ENCODE measurements at regions of chr22 and their contacts with region 1.

Region 1: DNA sequence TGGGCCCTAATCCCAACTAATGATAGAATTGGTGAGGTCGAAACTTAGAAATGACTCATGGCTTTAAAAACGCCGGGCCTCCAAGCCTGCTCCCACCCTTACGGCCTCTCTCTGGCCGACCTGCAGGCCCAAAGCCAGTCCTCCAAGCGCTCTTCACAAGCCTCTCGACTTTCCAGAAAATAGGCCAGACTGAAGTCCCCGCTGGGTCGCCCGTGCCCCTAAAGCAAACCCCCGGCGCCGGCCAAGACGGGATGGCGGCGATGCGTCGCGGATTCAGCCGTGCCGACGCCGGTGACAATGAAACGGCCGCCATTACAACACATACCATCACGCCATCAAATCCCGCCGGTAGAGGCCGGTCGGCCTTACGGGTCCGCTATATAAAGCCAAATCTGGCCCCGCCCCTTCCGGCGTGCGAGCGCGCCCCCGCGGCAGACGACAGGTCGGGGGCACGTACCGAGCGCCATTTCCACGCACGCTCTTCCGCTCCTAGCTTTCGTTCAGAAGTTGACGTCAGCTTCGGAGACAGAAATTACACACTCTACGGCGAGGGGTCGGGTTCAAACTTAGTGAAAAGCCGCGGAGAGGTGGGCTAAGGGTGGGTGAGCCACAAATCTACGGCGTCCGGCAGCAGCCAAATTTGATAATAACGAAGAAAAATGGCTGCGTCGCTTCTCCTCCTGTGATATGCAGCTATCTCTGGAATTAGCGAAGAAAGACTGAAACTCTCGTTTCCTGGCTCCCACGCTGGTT is at the start of gene RPL3:
- DNase-seq: peak; percentile 96
- ATAC-seq: peak; percentile 83
- H3K4me3 Mint-ChIP-seq: peak within 1 kb of the TSS; percentile 99
- H3K27ac Mint-ChIP-seq: peak within 1 kb of the TSS; percentile 100
- H3K4me1 Mint-ChIP-seq: peaks cover 31% of the 10 kb centered on the region
- H3K27me3 Mint-ChIP-seq: no peaks in the 10 kb centered on the region
- CTCF ChIP-seq: no peak
- total RNA-seq, gene RPL3: 3,563 to 3,599 TPM

Region 2: DNA sequence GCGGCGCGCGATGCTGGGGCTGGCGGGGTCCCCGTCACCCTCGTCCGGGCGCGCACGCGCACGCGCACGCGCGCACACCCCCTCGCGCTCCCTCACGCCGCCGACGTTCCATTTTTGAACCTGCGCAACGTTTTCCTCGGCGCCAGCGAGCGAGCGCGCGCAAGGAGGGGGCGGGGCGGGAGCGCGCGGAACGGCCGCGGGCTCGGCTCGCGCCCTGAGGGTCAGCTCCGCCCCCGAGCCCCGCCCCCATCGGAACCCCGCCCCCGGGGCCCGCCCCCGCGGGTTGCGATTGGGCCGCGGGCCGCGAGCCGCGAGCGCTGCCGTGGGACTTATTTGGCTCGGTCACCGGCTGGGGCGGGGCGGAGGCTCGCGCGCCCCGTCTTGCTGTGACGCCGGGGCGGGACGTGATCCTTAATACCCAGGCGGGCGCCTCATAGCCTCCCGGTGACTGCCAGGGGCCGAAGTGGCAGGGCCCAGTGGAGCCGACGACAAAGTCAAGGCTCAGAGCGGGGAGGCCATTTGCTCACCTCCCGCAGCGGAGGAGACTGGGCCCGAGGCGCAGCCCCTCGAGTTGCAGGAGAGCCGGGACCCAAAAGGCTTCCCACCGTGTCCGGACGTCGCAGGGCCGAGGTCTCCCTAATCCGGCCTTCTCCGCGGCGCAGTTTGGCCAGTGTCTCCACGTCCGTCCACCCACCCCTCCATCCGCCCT is 166.8 kb before region 1 on chr22 and contains the start of gene CBX7:
- CTCF ChIA-PET with region 1: interaction called, 6 read pairs
- POLR2A ChIA-PET with region 1: interaction called, 61 read pairs
- intact Hi-C with region 1: no loop called
- DNase-seq: peak; percentile 91
- ATAC-seq: peak; percentile 78
- H3K4me3 Mint-ChIP-seq: peak within 1 kb of the TSS; percentile 74
- H3K27ac Mint-ChIP-seq: peak within 1 kb of the TSS; percentile 78
- H3K4me1 Mint-ChIP-seq: peaks cover 44% of the 10 kb centered on the region
- H3K27me3 Mint-ChIP-seq: peaks cover 14% of the 10 kb centered on the region
- CTCF ChIP-seq: no peak
- total RNA-seq, gene CBX7: 23.6 to 25.0 TPM

Region 3: GRCh38 chr22:39236321-39237317 is 82.8 kb before region 1 on chr22:
- CTCF ChIA-PET with region 1: interaction called, 4 read pairs
- POLR2A ChIA-PET with region 1: interaction called, 25 read pairs
- intact Hi-C with region 1: no loop called
- DNase-seq: peak; percentile 82
- ATAC-seq: peak; percentile 55
- H3K4me3 Mint-ChIP-seq: peak overlapping the region; percentile 42
- H3K27ac Mint-ChIP-seq: peak overlapping the region; percentile 40
- H3K4me1 Mint-ChIP-seq: peaks cover 68% of the 10 kb centered on the region
- H3K27me3 Mint-ChIP-seq: peaks cover 23% of the 10 kb centered on the region
- CTCF ChIP-seq: no peak

Region 4: DNA sequence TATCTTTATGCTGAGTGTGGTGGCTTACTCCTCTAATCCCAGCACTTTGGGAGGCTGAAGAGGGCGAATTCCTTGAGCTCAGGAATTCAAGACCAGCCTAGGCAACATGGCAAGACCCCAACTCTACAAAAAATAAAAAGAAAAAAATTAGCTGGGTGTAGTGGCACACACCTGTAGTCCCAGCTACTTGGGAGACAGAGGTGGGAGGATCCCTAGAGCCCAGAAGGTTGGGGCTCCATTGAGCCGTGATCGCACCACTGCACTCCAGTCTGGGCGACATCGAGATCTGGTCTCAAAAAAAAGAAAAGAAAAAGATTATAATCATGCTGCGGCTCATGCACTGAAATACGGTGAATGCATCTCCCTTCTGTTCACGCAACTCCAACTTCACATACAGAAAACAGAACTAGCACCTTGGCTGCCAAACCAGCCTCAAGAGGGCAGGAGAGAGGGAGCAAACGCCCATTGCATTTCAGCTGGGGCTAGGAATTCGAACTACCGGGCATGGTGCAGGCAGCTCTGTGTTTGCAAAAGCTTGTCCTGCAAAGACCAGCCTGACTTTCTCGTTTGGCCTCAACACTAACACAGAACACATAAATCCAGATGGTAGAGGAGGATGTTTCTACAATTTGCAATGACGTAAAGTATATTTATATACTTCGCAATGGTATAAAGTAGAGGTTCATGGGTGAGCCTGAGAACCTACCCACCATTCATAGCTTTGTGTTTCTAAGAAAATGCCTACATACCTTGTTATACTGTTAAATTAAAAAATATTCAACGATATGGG is 24.0 kb after region 1 on chr22:
- CTCF ChIA-PET with region 1: interaction called, 10 read pairs
- POLR2A ChIA-PET with region 1: interaction called, 18 read pairs
- intact Hi-C with region 1: no loop called
- DNase-seq: peak; percentile 69
- ATAC-seq: peak; percentile 77
- H3K4me3 Mint-ChIP-seq: no peak overlapping the region
- H3K27ac Mint-ChIP-seq: no peak overlapping the region
- H3K4me1 Mint-ChIP-seq: peaks cover 4% of the 10 kb centered on the region
- H3K27me3 Mint-ChIP-seq: peaks cover 8% of the 10 kb centered on the region
- CTCF ChIP-seq: peak; percentile 72

Region 5: DNA sequence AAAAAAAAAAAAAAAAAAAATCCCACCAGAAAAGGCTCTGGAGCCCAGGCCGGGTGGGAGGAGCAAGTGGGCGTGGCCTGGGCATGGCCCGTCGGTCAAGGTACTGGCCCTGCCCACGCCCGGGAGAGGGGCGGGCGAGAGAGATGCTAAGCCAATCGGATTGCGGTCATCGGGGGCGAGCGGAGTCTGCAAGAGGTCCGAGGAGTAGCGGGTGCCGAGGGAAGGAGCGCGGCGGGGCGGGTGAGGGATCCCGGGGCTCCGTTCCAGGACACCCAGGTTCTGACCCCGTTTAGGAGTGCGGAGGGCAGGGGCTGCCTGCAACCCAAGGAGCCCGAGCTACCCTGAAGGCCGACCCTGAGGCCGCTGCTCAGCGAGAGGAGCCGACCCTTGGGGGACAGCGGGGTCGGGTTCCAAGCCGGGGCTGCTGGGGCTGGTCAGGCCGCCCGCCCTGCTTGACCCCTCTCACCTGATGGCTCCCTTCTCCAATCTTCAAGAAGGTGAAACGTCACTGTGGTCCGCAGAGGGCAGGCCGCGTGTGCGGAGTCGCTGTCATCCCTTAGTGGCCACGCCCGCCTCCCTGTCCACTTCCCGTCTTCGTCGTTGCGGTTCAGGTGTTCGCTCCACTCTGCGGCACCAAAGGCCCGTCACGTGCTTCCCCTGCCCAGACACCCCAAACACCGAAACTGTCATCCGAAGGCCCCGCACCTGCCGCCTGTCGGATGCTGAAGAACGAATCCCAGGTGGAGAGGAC is 69.0 kb after region 1 on chr22:
- CTCF ChIA-PET with region 1: no interaction called
- POLR2A ChIA-PET with region 1: interaction called, 7 read pairs
- intact Hi-C with region 1: loop called (anchors 10 kb)
- DNase-seq: peak; percentile 81
- ATAC-seq: peak; percentile 85
- H3K4me3 Mint-ChIP-seq: peak overlapping the region; percentile 71
- H3K27ac Mint-ChIP-seq: peak overlapping the region; percentile 66
- H3K4me1 Mint-ChIP-seq: peaks cover 8% of the 10 kb centered on the region
- H3K27me3 Mint-ChIP-seq: no peaks in the 10 kb centered on the region
- CTCF ChIP-seq: no peak

Region 6: DNA sequence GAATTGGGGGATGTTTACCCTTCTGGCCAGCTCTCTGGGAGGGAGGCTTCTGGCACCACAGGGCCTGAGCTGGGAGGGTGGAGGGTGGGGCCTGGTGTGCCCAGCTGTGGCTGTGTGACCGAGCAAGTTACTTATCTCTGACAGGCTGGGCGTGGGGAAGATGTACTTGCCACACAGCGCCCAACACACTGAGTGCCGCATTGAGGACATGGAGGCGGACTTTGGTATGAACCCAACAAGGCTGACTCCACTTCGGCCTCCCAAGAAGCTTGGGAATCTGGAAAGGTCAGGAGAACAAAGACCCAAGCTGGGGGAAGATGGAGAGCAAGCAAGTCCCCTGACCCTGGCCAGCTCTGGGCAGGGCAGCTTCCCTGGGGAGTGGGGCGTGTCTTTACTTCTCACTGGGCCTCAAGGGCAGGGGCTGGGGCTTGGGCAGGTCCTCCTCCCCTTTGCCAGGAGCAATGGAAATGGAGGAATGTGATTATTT is 135.0 kb after region 1 on chr22:
- CTCF ChIA-PET with region 1: no interaction called
- POLR2A ChIA-PET with region 1: no interaction called
- intact Hi-C with region 1: no loop called
- DNase-seq: no peak
- ATAC-seq: no peak
- H3K4me3 Mint-ChIP-seq: no peak overlapping the region
- H3K27ac Mint-ChIP-seq: no peak overlapping the region
- H3K4me1 Mint-ChIP-seq: peaks cover 24% of the 10 kb centered on the region
- H3K27me3 Mint-ChIP-seq: peaks cover 15% of the 10 kb centered on the region
- CTCF ChIP-seq: no peak

Region 7: GRCh38 chr22:39520054-39520891 is 200.8 kb after region 1 on chr22 and contains the start of gene ATF4:
- CTCF ChIA-PET with region 1: interaction called, 4 read pairs
- POLR2A ChIA-PET with region 1: interaction called, 211 read pairs
- intact Hi-C with region 1: loop called (anchors 5 kb)
- DNase-seq: peak; percentile 99
- ATAC-seq: peak; percentile 89
- H3K4me3 Mint-ChIP-seq: peak within 1 kb of the TSS; percentile 89
- H3K27ac Mint-ChIP-seq: peak within 1 kb of the TSS; percentile 98
- H3K4me1 Mint-ChIP-seq: peaks cover 57% of the 10 kb centered on the region
- H3K27me3 Mint-ChIP-seq: no peaks in the 10 kb centered on the region
- CTCF ChIP-seq: no peak
- total RNA-seq, gene ATF4: 518 to 536 TPM

Measured in activated CD8-positive, alpha-beta T cell treated with anti-CD3 and anti-CD28 coated beads for 36 hours (primary cell).